Dorsolateral prefrontal cortex (tissue), 120 donors: ENCODE measurements at regions of chr5 and their contacts with region 1.

Region 1: DNA sequence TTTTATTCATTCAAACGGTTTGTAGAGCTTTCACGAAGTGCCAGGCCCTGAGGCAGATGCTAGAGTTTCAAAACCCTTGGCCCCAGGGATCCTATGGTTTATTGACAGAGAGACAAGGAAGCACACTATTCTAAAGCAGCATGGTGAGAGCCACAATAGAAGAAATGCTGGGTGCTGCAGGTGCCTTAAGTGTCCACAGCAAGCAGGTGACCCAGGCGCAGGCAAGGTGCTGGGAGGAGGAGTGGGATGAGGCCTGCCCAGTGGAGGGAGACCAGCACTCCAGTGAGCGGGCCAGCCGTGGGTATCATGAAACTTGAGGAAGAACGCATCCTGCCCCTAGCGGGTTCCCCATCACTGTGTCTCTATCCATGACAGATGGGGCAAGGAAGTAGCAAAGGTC is 71.0 kb downstream of the OSMR start:
- DNase-seq: no peak
- H3K4me3 ChIP-seq: no peak overlapping the region
- H3K27ac ChIP-seq: no peak overlapping the region
- H3K27me3 ChIP-seq: no peaks in the 10 kb centered on the region
- CTCF ChIP-seq: no peak

Region 2: DNA sequence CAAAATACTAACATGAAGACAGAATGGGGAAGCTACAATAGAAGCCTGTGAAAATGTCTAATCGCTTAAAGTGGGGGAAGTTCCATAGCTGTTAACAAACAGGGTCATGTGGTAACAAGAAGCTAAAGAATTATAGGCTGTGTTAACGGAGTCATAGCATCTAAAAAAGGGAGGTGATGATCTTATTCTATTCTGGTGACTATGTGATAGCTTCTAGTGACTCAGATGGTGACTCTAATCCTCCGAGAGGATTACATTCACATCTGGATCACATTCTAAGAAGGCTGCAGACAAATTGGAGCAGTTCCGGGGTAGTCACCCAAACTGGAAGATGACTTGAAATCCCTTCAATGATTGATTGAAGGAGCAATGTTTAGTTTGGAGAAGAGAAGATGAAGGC is 502.5 kb before region 1 on chr5:
- intact Hi-C with region 1: loop called in 1 of 2 experiments (anchors 10 kb)
- DNase-seq: no peak
- H3K4me3 ChIP-seq: no peak overlapping the region
- H3K27ac ChIP-seq: no peak overlapping the region
- H3K27me3 ChIP-seq: peaks cover 0 to 11% (median 0%) of the 10 kb centered on the region in 45 donors
- CTCF ChIP-seq: no peak

Region 3: DNA sequence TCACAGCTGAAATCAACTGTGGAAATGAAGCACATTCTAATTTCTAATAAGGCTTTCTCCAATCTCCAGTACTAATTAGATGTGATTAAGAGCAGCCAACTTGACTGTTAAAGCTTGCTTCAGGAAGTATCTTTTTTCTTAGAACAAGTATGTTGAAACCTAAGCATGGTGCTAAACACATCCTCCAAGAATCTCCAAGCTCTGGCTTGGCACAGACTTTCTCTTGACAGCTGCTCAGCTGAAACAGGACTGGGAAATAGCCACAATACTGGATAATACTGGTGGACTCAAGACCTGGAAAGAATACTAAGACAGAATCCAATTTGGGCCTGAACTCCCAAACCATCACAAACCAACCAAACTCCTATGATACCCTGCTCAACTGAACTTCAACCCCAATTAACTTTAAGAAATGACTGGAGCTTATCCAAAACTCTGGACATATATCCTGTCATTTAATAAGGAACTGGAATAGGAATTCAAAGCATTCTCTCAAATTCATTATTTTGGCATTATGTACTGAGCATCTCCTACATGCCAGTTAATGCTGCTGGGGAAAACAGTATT is 1865.1 kb after region 1 on chr5:
- intact Hi-C with region 1: no loop called
- DNase-seq: no peak
- H3K4me3 ChIP-seq: no peak overlapping the region
- H3K27ac ChIP-seq: no peak overlapping the region
- H3K27me3 ChIP-seq: no peaks in the 10 kb centered on the region
- CTCF ChIP-seq: no peak